GM10248 (cell line): ENCODE measurements at regions of chr11 and their contacts with region 1.

Region 1: GRCh38 chr11:65859200-65859811 is 927 bp upstream of the MUS81 start:
- DNase-seq: peak; percentile 95
- CTCF ChIP-seq: peak; percentile 6

Region 2: GRCh38 chr11:65791691-65792213 is 67.6 kb before region 1 on chr11:
- CTCF ChIA-PET with region 1: no interaction called
- POLR2A ChIA-PET with region 1: no interaction called
- DNase-seq: peak; percentile 82
- CTCF ChIP-seq: no peak

Region 3: GRCh38 chr11:65833297-65834030 is 25.8 kb before region 1 on chr11 and contains the start of gene SNX32:
- CTCF ChIA-PET with region 1: interaction called, 7 read pairs
- POLR2A ChIA-PET with region 1: interaction called, 12 read pairs
- DNase-seq: peak; percentile 100
- CTCF ChIP-seq: no peak

Region 4: DNA sequence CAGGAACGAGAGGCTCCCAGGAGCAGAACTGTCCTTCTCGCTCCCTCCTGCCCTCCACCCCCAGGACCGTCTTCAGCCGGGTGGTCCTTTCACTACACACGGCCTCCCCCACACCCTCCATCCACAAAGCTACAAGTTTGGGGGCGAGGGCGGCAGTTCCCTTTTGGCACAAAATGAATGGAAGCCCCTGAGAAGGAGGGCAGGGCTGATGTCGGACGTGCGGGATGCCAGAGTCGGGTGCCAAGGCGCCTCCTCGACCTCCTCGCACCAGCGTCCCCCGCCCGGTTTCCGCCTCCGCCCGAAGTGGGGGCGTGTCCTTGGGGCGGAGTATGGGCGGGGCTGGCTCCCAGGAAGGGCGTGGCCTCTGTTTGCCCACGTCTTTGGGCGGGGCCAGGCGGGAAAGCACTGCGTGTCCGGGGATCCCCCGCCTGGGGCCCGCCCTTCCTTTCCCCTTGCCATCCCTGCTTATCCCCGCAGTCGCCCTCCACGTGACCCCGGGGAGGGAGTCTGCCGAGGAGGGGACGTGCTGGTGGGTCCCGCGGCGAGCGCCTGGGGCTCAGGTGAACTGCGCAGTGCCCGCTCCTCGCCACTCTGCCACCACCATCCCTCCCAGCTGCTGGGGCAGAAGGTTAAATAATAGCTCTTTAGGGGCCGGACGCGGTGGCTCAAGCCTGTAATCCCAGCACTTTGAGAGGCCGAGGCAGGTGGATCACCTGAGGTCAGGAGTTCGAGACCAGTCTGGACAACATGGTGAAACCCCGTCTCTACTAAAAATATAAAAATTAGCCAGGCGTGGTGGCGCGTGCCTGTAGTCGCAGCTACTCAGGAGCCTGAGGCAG is 14.2 kb after region 1 on chr11:
- CTCF ChIA-PET with region 1: interaction called, 535 read pairs
- POLR2A ChIA-PET with region 1: interaction called, 7 read pairs
- DNase-seq: peak; percentile 97
- CTCF ChIP-seq: no peak

Region 5: GRCh38 chr11:65988791-65989592 is 129.7 kb after region 1 on chr11:
- CTCF ChIA-PET with region 1: interaction called, 13 read pairs
- POLR2A ChIA-PET with region 1: no interaction called
- DNase-seq: peak; percentile 91
- CTCF ChIP-seq: peak; percentile 99